ENCODE measurements at regions of chr11 and their contacts with region 1.

Region 1: DNA sequence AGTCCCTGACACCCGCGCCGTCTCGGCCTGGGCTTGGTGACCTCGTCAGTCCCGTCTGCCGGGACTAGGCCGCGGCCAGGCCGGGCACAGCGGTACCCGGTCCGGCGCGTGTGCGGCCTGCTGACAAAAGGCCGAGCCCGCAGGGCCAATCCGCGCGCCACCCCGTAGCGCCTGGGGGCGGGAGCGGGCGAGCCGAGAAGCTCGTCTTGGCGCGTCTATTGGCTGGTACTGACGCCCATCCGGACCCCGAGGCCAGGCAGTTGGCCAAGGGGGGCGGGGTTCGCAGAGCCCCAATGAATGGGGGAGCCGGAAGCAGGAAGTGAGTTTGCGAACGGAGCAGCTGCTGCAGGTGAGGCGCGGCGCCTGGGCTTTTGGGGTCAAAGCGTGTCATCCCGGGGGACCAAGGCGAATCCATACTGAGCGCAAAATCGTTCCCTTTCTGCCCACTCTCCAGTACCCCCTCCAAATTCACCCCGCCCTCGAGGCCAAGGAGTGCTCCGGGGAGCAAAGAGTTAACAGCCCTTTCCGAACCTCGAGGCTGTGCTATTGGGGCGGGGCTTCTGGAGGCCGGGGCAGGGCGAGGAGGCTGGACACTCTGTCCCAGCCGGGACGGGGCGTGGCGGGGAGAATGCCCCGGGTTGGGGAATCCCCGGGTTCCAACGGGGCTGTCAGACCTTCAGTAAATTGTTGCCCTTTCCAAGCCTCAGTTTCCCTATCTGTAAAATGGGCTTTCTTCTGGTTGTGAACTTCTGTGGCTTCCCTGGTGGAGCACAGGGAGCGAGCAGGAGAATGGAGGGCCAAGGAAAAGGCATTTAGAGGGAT is at the start of gene DPP3:
- DNase-seq: peak; percentile 98
- ATAC-seq: peak; percentile 98
- H3K4me3 Mint-ChIP-seq: peak within 1 kb of the TSS; percentile 90
- H3K27ac Mint-ChIP-seq: peak within 1 kb of the TSS; percentile 86
- H3K4me1 Mint-ChIP-seq: peaks cover 22% of the 10 kb centered on the region
- H3K27me3 Mint-ChIP-seq: no peaks in the 10 kb centered on the region
- total RNA-seq, gene DPP3: 87.1 to 91.9 TPM

Region 2: GRCh38 chr11:66371627-66372415 is 108.5 kb before region 1 on chr11 and contains the start of gene SLC29A2:
- CTCF ChIA-PET with region 1: interaction called, 3 read pairs
- POLR2A ChIA-PET with region 1: no interaction called
- intact Hi-C with region 1: loop called in 1 of 2 experiments (anchors 1 kb)
- DNase-seq: peak; percentile 92
- ATAC-seq: peak; percentile 87
- H3K4me3 Mint-ChIP-seq: peak within 1 kb of the TSS; percentile 91
- H3K27ac Mint-ChIP-seq: peak within 1 kb of the TSS; percentile 91
- H3K4me1 Mint-ChIP-seq: peaks cover 19% of the 10 kb centered on the region
- H3K27me3 Mint-ChIP-seq: no peaks in the 10 kb centered on the region
- total RNA-seq, gene SLC29A2: 13.6 to 14.4 TPM

Region 3: GRCh38 chr11:66429983-66430602 is 50.2 kb before region 1 on chr11:
- CTCF ChIA-PET with region 1: interaction called, 3 read pairs
- POLR2A ChIA-PET with region 1: interaction called, 3 read pairs
- intact Hi-C with region 1: loop called in 1 of 2 experiments (anchors 2 kb)
- DNase-seq: peak; percentile 91
- ATAC-seq: peak; percentile 97
- H3K4me3 Mint-ChIP-seq: no peak overlapping the region
- H3K27ac Mint-ChIP-seq: no peak overlapping the region
- H3K4me1 Mint-ChIP-seq: no peaks in the 10 kb centered on the region
- H3K27me3 Mint-ChIP-seq: no peaks in the 10 kb centered on the region

Region 4: DNA sequence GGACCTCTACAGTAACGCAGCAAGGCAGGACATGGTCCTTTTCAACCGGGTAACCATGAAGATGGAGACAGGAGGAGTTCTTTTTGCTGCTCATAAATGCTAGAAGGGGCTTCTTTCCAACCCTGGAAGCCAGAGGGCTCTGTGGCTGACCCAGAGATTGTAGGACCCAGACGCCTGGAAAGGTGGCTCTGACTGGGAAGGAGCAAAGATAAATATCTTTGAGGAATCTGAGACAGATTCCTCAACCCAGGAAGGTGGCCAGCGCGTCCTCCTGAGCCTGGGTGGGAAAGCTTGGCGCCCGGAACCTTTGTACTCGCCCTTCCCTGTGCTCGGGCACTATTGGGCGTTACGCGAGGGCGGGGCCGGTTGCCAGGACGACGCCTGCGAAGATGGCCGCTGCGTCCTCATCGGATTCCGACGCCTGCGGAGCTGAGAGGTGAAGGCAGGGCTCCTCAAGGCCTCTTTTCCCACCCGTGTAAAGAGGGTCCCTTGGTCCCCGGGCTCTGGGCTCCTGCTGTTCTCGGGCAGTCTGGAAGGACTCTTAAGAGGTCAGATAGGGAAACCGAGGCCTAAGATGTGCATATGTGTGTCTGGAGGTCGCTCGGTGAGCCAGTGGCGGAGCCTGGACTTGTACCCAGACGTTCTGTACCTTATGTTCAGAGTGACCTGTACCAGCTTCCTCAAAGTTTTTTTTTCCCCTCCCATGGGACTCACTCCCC is 30.1 kb after region 1 on chr11 and contains the start of gene BBS1:
- CTCF ChIA-PET with region 1: interaction called, 3 read pairs
- POLR2A ChIA-PET with region 1: no interaction called
- intact Hi-C with region 1: loop called in 1 of 2 experiments (anchors 1 kb)
- DNase-seq: peak; percentile 88
- ATAC-seq: peak; percentile 98
- H3K4me3 Mint-ChIP-seq: peak within 1 kb of the TSS; percentile 86
- H3K27ac Mint-ChIP-seq: peak within 1 kb of the TSS; percentile 48
- H3K4me1 Mint-ChIP-seq: peaks cover 10% of the 10 kb centered on the region
- H3K27me3 Mint-ChIP-seq: no peaks in the 10 kb centered on the region
- total RNA-seq, gene BBS1: 9.4 to 10.7 TPM

Region 5: GRCh38 chr11:66744485-66745340 is 264.4 kb after region 1 on chr11:
- CTCF ChIA-PET with region 1: no interaction called
- POLR2A ChIA-PET with region 1: no interaction called
- intact Hi-C with region 1: loop called in 1 of 2 experiments (anchors 1 kb)
- DNase-seq: peak; percentile 93
- ATAC-seq: peak; percentile 88
- H3K4me3 Mint-ChIP-seq: peak overlapping the region; percentile 95
- H3K27ac Mint-ChIP-seq: peak overlapping the region; percentile 84
- H3K4me1 Mint-ChIP-seq: peaks cover 7% of the 10 kb centered on the region
- H3K27me3 Mint-ChIP-seq: no peaks in the 10 kb centered on the region

Region 6: GRCh38 chr11:66976048-66976467 is 495.7 kb after region 1 on chr11:
- CTCF ChIA-PET with region 1: no interaction called
- POLR2A ChIA-PET with region 1: no interaction called
- intact Hi-C with region 1: no loop called
- DNase-seq: peak; percentile 49
- ATAC-seq: peak; percentile 55
- H3K4me3 Mint-ChIP-seq: no peak overlapping the region
- H3K27ac Mint-ChIP-seq: no peak overlapping the region
- H3K4me1 Mint-ChIP-seq: peaks cover 4% of the 10 kb centered on the region
- H3K27me3 Mint-ChIP-seq: peaks cover 9% of the 10 kb centered on the region